Activated CD4-positive, alpha-beta T cell treated with anti-CD3 and anti-CD28 coated beads for 36 hours (primary cell): ENCODE measurements at regions of chr17 and their contacts with region 1.

Region 1: DNA sequence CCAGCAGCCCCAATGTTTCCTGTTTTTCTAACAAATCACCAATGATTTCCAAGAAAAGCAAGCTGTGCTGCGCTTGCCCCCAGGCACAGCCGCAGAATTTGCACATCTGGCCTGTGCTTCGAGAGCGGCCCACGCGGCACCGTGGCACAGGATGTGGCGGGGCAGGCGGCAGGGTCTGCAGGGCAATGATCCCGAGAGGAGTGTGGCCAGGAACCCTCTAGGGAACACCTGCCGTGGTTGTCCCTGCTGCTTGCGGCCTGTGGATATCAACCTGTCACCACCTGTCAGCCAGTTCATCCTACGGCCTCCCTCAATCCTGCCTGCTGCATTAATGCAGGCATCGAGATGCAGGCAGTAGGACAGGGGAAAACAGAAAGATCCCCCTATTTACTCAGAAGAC is 24.0 kb downstream of the PIK3R5 start:
- DNase-seq: peak; percentile 84
- ATAC-seq: peak; percentile 51
- H3K4me3 Mint-ChIP-seq: peak overlapping the region; percentile 52
- H3K27ac Mint-ChIP-seq: peak overlapping the region; percentile 89
- H3K4me1 Mint-ChIP-seq: peaks cover 75% of the 10 kb centered on the region
- H3K27me3 Mint-ChIP-seq: no peaks in the 10 kb centered on the region

Region 2: DNA sequence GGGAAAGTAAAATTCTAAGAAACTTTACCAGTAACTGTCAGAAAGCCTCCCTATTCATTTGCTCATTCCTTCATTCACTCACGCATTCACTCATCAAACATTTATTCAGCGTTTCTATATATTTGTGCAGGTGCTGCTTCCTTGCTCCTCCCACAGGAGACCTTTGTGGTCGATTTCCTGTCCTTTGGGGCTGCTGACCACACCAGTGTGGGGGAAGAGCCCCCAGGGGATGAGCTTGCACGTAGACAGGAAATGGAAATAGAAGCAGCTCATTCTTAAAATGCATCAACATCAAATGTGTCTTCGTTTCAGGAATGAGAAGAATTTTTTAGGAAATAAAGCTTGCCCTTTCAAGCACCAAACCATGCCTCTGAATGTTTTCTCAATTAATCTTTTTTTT is 83.6 kb before region 1 on chr17:
- CTCF ChIA-PET with region 1: no interaction called
- POLR2A ChIA-PET with region 1: no interaction called
- intact Hi-C with region 1: loop called in 1 of 2 experiments (anchors 2 kb)
- DNase-seq: peak; percentile 81
- ATAC-seq: peak; percentile 70
- H3K4me3 Mint-ChIP-seq: peak overlapping the region; percentile 6
- H3K27ac Mint-ChIP-seq: peak overlapping the region; percentile 80
- H3K4me1 Mint-ChIP-seq: peaks cover 54% of the 10 kb centered on the region
- H3K27me3 Mint-ChIP-seq: no peaks in the 10 kb centered on the region

Region 3: GRCh38 chr17:9064311-9064844 is 122.9 kb after region 1 on chr17:
- CTCF ChIA-PET with region 1: no interaction called
- POLR2A ChIA-PET with region 1: no interaction called
- intact Hi-C with region 1: no loop called
- DNase-seq: no peak
- ATAC-seq: no peak
- H3K4me3 Mint-ChIP-seq: no peak overlapping the region
- H3K27ac Mint-ChIP-seq: no peak overlapping the region
- H3K4me1 Mint-ChIP-seq: no peaks in the 10 kb centered on the region
- H3K27me3 Mint-ChIP-seq: peaks cover 4% of the 10 kb centered on the region